ENCODE measurements at regions of chr5 and their contacts with region 1.

Region 1: DNA sequence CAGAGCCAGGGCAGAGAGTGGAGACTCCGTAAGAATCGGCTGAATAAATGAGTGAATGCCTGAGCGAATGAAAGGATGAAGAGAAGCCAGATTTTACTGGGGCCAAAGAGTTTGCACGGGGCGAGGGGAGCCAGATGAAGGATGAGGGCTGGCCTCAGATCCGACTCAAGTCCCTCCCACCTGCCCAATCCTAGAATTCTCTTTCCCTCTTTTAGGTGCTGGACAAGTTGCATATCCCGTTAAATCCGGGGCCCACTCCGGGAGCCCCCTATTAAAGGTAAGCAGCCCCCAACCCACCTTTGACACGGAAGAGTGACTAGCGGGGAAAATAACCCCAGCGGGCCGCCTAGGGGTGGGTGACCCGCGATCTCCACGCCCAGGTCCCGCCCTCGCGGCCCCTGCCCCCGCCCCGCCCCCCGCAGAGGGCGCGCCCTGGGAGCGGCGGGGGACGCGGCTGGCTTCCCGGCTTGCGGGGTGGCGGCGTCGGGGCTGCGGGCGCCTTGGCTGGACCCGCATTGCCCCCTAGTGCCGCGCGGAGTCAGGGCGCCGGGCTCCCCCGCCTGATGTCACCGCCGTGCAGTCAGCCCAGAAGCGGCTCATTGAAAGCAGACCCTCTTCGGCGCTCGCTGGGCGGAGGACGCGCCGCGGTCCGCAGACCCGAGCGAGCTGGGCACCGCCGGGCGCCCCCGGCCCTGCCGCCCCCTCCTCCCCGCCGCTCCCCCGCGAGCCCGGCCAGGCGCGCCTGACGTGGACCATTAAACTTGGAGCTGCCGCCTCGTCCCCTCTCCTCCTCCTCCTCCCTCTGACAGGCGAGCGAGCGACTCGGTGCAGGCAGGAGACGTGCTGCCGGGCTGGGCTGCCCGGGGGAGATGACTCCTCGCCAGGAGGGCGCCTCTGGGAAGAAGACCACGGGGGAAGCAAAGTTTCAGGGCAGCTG is at the start of gene ADRA1B:
- DNase-seq: peak; percentile 42
- H3K4me3 ChIP-seq: peak within 1 kb of the TSS in 2 of 3 experiments; percentile 28 to 48
- H3K27ac ChIP-seq: no peak within 1 kb of the TSS
- H3K4me1 ChIP-seq: peaks cover 27% of the 10 kb centered on the region
- H3K27me3 ChIP-seq: peaks cover 4 to 10% of the 10 kb centered on the region in 2 experiments
- CTCF ChIP-seq: peak; percentile 19 to 55
- POLR2A ChIP-seq: no peak
- total RNA-seq, gene ADRA1B: 0.21 TPM in 1 of 2 replicates, not detected in the other

Region 2: DNA sequence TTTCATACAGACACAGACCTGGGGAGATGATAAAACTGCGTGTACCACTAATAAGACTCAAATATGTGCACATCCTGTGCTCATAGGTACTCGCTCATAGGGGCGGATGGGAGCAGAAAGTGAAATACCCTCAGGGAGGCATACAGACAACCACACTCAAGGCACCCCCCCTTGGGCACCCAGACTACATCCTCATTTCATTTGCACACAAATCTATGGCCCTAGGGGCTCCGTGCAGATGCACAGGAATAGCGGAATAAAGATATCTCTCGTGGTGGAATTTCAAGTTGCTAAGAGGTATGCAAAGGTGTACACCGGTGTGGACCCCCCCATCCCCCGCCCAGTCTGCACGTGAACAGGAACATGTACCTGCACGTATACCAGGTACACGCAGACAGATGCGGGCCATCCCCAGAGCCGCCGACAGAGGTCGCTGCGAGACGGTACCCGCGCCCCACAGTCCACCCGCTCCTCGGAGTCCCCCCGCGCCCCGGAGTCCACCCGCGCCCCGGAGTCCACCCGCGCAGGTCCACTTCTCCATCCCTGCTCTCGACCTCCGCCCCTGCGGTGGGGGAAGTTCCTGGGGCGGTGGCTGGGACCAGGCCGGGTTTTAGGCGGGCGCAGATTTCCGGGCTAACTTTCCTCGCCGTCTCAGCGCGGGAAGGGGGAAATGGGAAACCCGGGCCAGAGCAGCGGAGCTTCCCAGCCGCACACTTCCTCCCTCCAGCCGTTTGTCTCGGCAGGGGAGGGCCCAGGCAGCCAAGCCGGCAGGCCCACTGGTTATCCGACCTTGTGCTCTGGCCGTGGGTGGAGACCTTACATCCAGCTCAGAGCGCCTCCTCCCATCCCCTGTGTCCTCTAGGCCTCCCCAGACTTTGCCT is 584.8 kb before region 1 on chr5:
- CTCF ChIA-PET with region 1: interaction called, 3 read pairs
- POLR2A ChIA-PET with region 1: no interaction called
- dilution Hi-C with region 1: no loop called
- intact Hi-C with region 1: loop called (anchors 5 kb)
- DNase-seq: peak; percentile 30
- H3K4me3 ChIP-seq: peak overlapping the region in 2 of 3 experiments; percentile 8 to 21
- H3K27ac ChIP-seq: no peak overlapping the region
- H3K4me1 ChIP-seq: peaks cover 3% of the 10 kb centered on the region
- H3K27me3 ChIP-seq: peaks cover 0 to 3% of the 10 kb centered on the region in 2 experiments
- CTCF ChIP-seq: peak; percentile 64 to 81
- POLR2A ChIP-seq: no peak

Region 3: GRCh38 chr5:159515909-159516415 is 400.2 kb before region 1 on chr5:
- CTCF ChIA-PET with region 1: interaction called, 3 read pairs
- POLR2A ChIA-PET with region 1: no interaction called
- dilution Hi-C with region 1: no loop called
- intact Hi-C with region 1: loop called (anchors 10 kb)
- DNase-seq: peak; percentile 30
- H3K4me3 ChIP-seq: no peak overlapping the region
- H3K27ac ChIP-seq: no peak overlapping the region
- H3K4me1 ChIP-seq: no peaks in the 10 kb centered on the region
- H3K27me3 ChIP-seq: no peaks in the 10 kb centered on the region
- CTCF ChIP-seq: peak; percentile 59
- POLR2A ChIP-seq: no peak

Region 4: GRCh38 chr5:159682623-159683022 is 233.5 kb before region 1 on chr5:
- CTCF ChIA-PET with region 1: no interaction called
- POLR2A ChIA-PET with region 1: no interaction called
- dilution Hi-C with region 1: no loop called
- intact Hi-C with region 1: no loop called
- DNase-seq: no peak
- H3K4me3 ChIP-seq: no peak overlapping the region
- H3K27ac ChIP-seq: no peak overlapping the region
- H3K4me1 ChIP-seq: no peaks in the 10 kb centered on the region
- H3K27me3 ChIP-seq: no peaks in the 10 kb centered on the region
- CTCF ChIP-seq: no peak
- POLR2A ChIP-seq: no peak

Region 5: GRCh38 chr5:160303690-160304089 is 387.5 kb after region 1 on chr5:
- CTCF ChIA-PET with region 1: no interaction called
- POLR2A ChIA-PET with region 1: no interaction called
- dilution Hi-C with region 1: no loop called
- intact Hi-C with region 1: no loop called
- DNase-seq: no peak
- H3K4me3 ChIP-seq: no peak overlapping the region
- H3K27ac ChIP-seq: no peak overlapping the region
- H3K4me1 ChIP-seq: no peaks in the 10 kb centered on the region
- H3K27me3 ChIP-seq: no peaks in the 10 kb centered on the region
- CTCF ChIP-seq: no peak
- POLR2A ChIP-seq: no peak

Measured in endothelial cell of umbilical vein (primary cell).